Psoas muscle (tissue), 8 donors: ENCODE measurements at regions of chr5 and their contacts with region 1.

Region 1: DNA sequence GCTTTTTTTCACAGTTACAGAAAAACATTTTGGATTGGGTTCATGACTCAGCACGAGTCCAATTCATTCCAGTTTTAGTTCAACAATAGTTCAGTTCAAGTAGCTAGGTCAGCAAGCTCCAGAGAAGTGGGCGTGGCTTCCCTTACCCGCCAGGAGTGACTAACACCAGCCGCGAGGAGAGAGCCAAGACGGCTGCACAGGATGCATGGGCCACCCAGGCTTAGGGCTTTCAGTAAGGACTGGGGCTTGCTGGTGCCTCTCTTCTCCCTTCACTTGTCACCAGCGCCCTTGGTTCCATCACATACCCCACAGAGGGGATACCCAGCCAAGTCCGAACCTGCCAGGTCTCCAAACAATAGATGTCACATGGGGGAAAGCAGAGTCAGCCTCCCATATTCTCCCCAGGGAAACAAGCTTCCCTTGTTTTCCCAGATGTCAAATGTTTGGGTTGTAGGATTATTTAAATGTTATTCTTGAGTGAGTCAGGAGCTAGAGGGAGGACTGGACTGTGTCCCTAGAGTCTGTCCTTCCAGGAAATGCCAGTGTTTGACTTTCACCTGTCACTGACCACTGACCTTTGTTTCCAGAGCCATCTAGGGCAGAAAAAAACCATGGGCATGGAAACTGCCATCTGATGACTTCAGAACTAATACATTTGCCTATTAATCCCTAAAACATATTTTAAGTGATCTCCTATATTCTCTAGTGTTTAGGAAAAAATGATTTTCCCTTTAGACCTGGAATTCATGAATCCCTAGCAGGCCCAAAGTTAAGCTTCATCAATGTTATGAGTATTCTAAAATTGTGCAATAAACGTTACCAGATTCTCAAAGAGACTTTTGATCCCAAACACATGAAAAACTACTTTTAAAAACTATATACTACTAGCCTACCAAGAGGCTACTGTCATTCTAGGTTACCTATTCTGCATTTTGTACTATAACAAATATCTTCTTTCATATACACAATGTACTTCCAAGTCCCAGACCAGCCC is 51.9 kb downstream of the NIPAL4 start:
- DNase-seq: peak; percentile 92 to 94
- ATAC-seq: peak; percentile 87 to 93 (median 92)
- H3K4me3 ChIP-seq: no peak overlapping the region
- H3K27ac ChIP-seq: peak overlapping the region; percentile 53
- H3K4me1 ChIP-seq: peaks cover 25% of the 10 kb centered on the region
- H3K27me3 ChIP-seq: no peaks in the 10 kb centered on the region
- CTCF ChIP-seq: no peak

Region 2: GRCh38 chr5:157167214-157167621 is 344.7 kb before region 1 on chr5:
- intact Hi-C with region 1: no loop called
- DNase-seq: no peak
- ATAC-seq: no peak
- H3K4me3 ChIP-seq: no peak overlapping the region
- H3K27ac ChIP-seq: no peak overlapping the region
- H3K4me1 ChIP-seq: no peaks in the 10 kb centered on the region
- H3K27me3 ChIP-seq: peaks cover 0 to 2% (median 0%) of the 10 kb centered on the region in 3 donors
- CTCF ChIP-seq: no peak

Region 3: DNA sequence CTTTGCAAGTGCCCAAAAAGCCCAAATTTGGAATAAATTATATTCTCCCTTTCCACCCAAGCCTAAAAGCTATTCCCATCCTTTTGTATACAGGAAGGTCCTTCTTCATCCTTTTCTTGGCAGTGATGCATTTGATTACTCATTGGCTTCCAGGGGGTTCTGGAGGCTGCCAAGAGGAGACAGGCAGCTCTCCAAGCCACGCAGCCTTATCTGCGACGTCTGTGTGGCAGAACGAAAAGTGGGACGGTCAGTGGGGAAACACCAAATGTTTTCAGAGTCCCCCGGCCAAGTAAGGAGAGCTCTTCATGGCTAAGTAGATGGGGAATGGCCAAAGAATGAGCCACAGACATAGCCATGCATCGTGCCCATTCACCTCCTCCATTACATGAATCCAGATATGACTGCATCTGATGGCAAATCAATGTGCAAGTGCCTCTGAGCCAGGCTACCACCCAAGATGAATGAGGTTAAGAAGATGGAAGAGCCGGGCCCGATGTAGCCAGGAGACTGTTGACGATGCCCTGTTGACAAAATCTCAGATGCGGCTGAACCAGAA is 51.5 kb after region 1 on chr5:
- intact Hi-C with region 1: loop called (anchors 5 kb)
- DNase-seq: peak; percentile 41 to 56
- ATAC-seq: peak; percentile 28 to 45 (median 30)
- H3K4me3 ChIP-seq: no peak overlapping the region
- H3K27ac ChIP-seq: peak overlapping the region; percentile 66
- H3K4me1 ChIP-seq: peaks cover 60% of the 10 kb centered on the region
- H3K27me3 ChIP-seq: no peaks in the 10 kb centered on the region
- CTCF ChIP-seq: no peak

Region 4: GRCh38 chr5:158414780-158415179 is 902.8 kb after region 1 on chr5:
- intact Hi-C with region 1: no loop called
- DNase-seq: no peak
- ATAC-seq: peak in 2 of 4 donors; percentile 57 to 67
- H3K4me3 ChIP-seq: no peak overlapping the region
- H3K27ac ChIP-seq: no peak overlapping the region
- H3K4me1 ChIP-seq: no peaks in the 10 kb centered on the region
- H3K27me3 ChIP-seq: no peaks in the 10 kb centered on the region
- CTCF ChIP-seq: no peak